Caco-2 (cell line): ENCODE measurements at regions of chr10 and their contacts with region 1.

Region 1: DNA sequence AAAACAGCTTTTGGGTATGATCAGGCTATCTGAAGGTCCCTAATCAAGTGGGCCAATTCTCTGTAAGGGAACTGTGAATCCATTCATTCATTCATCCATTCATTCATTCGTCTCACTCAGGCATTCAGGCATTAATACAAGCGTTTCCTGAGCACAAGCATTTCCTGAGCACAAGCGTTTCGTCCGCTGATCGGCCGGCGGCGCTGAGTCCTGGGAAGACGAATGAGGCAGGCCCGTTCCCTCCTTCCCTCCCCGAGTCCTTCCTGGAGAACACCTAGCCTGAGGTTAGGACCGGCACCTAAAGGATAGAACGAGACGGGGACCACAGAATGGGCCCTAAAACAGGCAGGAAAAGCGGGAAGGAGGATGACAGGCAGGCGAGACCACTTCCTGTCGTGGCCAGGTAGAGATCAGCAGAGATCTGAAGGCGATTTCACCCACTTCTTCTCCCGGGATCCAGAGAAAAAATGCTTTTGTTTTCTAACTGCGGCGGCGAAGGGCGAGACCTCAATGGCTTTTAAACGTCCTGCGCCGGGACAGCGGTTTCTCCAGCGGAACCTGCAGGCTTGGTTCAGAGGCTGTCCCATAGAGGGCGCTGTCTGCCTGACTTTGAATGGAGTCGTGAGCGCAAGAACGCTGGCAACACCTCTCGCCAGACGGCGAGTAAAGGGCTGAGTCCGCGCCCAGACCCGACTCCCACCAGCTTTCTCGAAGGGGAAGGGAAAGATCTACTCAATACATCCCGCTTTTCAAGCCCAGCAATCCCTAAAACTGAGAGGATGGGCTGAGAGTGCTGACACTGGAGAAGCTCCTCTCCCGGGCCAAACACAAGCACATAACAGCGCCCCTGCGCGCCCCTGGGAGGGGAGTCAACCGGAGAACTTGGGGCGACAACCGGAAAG is 2.9 kb upstream of the HMX3 start:
- DNase-seq: peak; percentile 86 to 88
- H3K4me3 ChIP-seq: no peak overlapping the region
- H3K4me3 Mint-ChIP-seq: peak overlapping the region; percentile 34
- H3K27ac Mint-ChIP-seq: no peak overlapping the region
- H3K4me1 ChIP-seq: peaks cover 20% of the 10 kb centered on the region
- H3K4me1 Mint-ChIP-seq: no peaks in the 10 kb centered on the region
- H3K27me3 ChIP-seq: peaks cover 8% of the 10 kb centered on the region
- H3K27me3 Mint-ChIP-seq: peaks cover 30% of the 10 kb centered on the region
- CTCF ChIP-seq: peak; percentile 93 to 95

Region 2: GRCh38 chr10:122485670-122486069 is 647.2 kb before region 1 on chr10:
- CTCF ChIA-PET with region 1: no interaction called
- POLR2A ChIA-PET with region 1: no interaction called
- intact Hi-C with region 1: no loop called
- DNase-seq: no peak
- H3K4me3 ChIP-seq: no peak overlapping the region
- H3K4me3 Mint-ChIP-seq: no peak overlapping the region
- H3K27ac Mint-ChIP-seq: no peak overlapping the region
- H3K4me1 ChIP-seq: no peaks in the 10 kb centered on the region
- H3K4me1 Mint-ChIP-seq: no peaks in the 10 kb centered on the region
- H3K27me3 ChIP-seq: no peaks in the 10 kb centered on the region
- H3K27me3 Mint-ChIP-seq: peaks cover 6% of the 10 kb centered on the region
- CTCF ChIP-seq: no peak

Region 3: DNA sequence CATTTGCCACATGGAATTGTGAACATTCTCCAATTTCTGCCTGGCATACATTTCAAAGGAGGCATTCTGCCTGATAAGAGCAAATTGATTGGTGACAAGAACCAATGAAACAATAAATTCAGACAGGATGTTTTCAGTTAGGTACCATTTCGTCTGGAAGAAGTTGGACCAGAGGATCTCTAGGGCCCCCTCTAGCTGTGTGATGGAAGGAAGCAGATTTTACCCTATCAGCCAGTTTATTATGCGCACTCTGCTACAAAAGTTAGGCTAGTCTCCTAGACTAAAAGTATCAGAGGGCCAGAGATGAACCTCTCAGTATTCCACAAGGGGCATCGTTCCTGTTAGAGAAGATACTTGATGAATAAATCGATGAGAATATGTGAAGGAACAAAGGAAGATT is 139.3 kb after region 1 on chr10:
- CTCF ChIA-PET with region 1: no interaction called
- POLR2A ChIA-PET with region 1: no interaction called
- intact Hi-C with region 1: loop called (anchors 2 kb)
- DNase-seq: no peak
- H3K4me3 ChIP-seq: no peak overlapping the region
- H3K4me3 Mint-ChIP-seq: no peak overlapping the region
- H3K27ac Mint-ChIP-seq: no peak overlapping the region
- H3K4me1 ChIP-seq: no peaks in the 10 kb centered on the region
- H3K4me1 Mint-ChIP-seq: no peaks in the 10 kb centered on the region
- H3K27me3 ChIP-seq: no peaks in the 10 kb centered on the region
- H3K27me3 Mint-ChIP-seq: peaks cover 12% of the 10 kb centered on the region
- CTCF ChIP-seq: peak in 1 of 2 experiments; percentile 51

Region 4: DNA sequence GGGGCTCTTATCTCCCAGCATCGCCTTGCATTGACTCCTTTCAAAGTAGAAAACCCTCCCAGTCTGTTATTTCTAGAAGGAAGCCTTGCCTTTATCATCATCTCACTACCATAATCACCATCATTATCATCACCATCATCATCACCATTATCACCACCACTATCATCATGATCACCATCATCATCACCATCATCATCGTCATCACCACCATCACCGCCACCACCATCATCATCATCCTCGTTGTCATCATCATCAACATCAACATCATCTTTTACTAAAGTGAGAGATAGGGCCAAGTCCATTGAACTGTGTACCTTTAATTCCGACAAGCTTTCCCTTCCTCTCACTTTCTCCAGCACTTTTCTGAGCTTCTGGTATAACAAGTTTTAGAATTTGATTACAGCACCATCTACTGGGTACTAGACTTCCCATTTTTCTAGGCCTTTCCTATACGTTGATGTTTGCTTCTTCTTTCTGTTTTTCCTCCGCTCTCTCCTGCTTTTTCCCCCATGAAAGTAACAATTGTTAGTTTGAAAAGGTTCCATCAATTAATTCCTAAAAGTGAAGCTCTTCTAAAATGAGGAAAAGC is 247.8 kb after region 1 on chr10:
- CTCF ChIA-PET with region 1: interaction called, 9 read pairs
- POLR2A ChIA-PET with region 1: no interaction called
- intact Hi-C with region 1: loop called (anchors 2 kb)
- DNase-seq: no peak
- H3K4me3 ChIP-seq: no peak overlapping the region
- H3K4me3 Mint-ChIP-seq: no peak overlapping the region
- H3K27ac Mint-ChIP-seq: no peak overlapping the region
- H3K4me1 ChIP-seq: peaks cover 9% of the 10 kb centered on the region; the same call in 1 of the 2 replicates
- H3K4me1 Mint-ChIP-seq: no peaks in the 10 kb centered on the region
- H3K27me3 ChIP-seq: no peaks in the 10 kb centered on the region; the same call in 1 of the 2 replicates
- H3K27me3 Mint-ChIP-seq: peaks cover 18% of the 10 kb centered on the region
- CTCF ChIP-seq: peak in 1 of 2 experiments; percentile 48

Region 5: DNA sequence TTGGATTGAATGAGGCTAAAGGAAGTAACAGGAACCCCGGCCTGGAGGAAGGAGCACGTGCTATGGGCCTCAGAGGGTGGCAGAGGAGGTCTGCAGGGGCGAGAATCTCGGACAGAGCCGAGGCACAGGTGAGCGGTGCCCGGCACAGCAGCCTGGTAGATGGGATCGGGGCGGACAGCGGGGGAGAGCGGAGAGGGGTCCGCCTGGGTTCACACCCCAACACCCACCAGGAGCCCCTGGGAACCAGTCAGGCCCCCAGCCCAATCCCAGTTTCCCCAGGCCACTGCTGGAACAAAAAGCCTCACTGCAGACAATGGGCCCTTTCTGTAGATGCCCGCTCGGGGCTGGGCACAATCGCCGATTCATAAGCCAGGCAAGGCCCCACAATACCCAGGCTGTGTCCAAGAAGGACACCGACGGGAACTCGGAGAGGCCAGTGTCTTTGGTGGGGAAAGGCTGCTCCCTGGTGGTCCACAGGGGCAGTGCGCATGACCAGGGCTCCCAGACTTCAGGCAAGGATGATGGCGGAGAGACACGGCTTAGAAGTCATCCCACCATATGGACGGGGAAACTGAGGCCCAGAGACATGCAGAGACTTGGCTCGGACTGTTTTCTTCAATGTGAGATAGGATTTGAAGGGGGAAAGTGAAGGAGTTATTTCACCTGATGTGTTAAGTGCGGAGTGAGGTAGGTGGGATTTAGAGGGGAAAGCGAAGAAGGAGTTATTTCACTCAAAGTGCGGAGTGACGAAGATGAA is 426.4 kb after region 1 on chr10:
- CTCF ChIA-PET with region 1: no interaction called
- POLR2A ChIA-PET with region 1: no interaction called
- intact Hi-C with region 1: loop called (anchors 1 kb)
- DNase-seq: peak; percentile 63 to 75
- H3K4me3 ChIP-seq: no peak overlapping the region
- H3K4me3 Mint-ChIP-seq: no peak overlapping the region
- H3K27ac Mint-ChIP-seq: no peak overlapping the region
- H3K4me1 ChIP-seq: no peaks in the 10 kb centered on the region
- H3K4me1 Mint-ChIP-seq: no peaks in the 10 kb centered on the region
- H3K27me3 ChIP-seq: no peaks in the 10 kb centered on the region
- H3K27me3 Mint-ChIP-seq: peaks cover 13% of the 10 kb centered on the region
- CTCF ChIP-seq: peak; percentile 93 to 96